ENCODE measurements at regions of chr14 and their contacts with region 1.

Region 1: GRCh38 chr14:93655078-93655750 is 133.1 kb downstream of the PRIMA1 start:
- DNase-seq: no peak
- ATAC-seq: peak in 2 of 4 donors; percentile 41 to 42
- H3K4me3 ChIP-seq: no peak overlapping the region
- H3K27ac ChIP-seq: no peak overlapping the region
- H3K4me1 ChIP-seq: peaks cover 0 to 5% (median 0%) of the 10 kb centered on the region in 12 donors
- H3K27me3 ChIP-seq: peaks cover 0 to 4% (median 0%) of the 10 kb centered on the region in 9 donors
- CTCF ChIP-seq: peak; percentile 37 to 69 (median 51)
- POLR2A ChIP-seq: no peak

Region 2: GRCh38 chr14:93892923-93893558 is 237.8 kb after region 1 on chr14:
- intact Hi-C with region 1: loop called (anchors 1 to 5 kb)
- DNase-seq: peak; percentile 58 to 82 (median 63)
- ATAC-seq: peak; percentile 21 to 72 (median 54)
- H3K4me3 ChIP-seq: peak overlapping the region in 2 of 12 donors; percentile 7 to 21
- H3K27ac ChIP-seq: no peak overlapping the region
- H3K4me1 ChIP-seq: peaks cover 0 to 11% (median 1%) of the 10 kb centered on the region in 12 donors
- H3K27me3 ChIP-seq: peaks cover 0 to 14% (median 0%) of the 10 kb centered on the region in 9 donors
- CTCF ChIP-seq: peak; percentile 92 to 99 (median 98)
- POLR2A ChIP-seq: no peak

Region 3: GRCh38 chr14:93906341-93907329 is 251.4 kb after region 1 on chr14:
- intact Hi-C with region 1: loop called in 2 of 10 experiments (anchors 5 kb)
- DNase-seq: peak in 1 of 5 donors; percentile 43
- ATAC-seq: peak in 3 of 4 donors; percentile 36 to 62 (median 39)
- H3K4me3 ChIP-seq: no peak overlapping the region
- H3K27ac ChIP-seq: no peak overlapping the region
- H3K4me1 ChIP-seq: no peaks in the 10 kb centered on the region
- H3K27me3 ChIP-seq: peaks cover 0 to 13% (median 7%) of the 10 kb centered on the region in 9 donors
- CTCF ChIP-seq: peak; percentile 37 to 64 (median 48)
- POLR2A ChIP-seq: no peak

Region 4: DNA sequence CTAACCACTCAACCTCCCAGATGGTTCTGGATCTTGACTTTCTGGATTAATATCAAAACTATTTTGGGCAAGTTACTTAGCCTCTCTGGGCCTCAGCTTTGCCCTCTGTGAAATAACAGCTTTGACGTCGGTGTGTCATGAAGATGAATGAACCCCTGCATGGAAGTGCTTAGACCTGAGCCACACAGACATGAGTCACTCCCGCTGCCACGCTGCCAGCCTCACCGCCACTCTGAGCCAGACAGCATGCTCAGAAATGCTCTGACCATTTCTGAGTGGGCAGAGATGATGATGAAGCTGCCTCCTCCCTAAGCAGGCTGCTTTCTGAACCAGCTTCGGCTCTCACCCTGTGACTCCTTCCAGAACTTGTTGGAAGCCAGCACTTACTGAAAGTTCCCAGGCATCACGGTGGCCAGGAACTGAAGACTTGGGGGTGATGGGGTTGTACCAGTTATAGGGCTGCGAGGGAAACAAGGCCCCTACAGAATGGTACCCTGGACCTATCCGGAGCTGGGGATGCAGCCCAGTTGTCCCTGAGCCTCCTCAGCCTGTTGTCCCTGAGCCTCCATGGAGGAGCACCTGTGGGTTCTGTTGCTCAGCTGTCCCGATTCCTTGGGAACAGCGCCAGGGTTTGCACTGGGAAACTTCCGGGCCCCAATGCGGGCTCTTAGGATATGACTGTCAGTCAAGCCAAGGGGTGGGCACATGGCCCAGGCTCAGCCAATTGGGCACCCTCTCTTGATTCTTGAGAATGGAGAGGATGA is 339.9 kb after region 1 on chr14:
- intact Hi-C with region 1: loop called in 3 of 10 experiments (anchors 10 kb)
- DNase-seq: peak in 4 of 5 donors; percentile 50 to 88 (median 60)
- ATAC-seq: peak; percentile 70 to 90 (median 74)
- H3K4me3 ChIP-seq: no peak overlapping the region
- H3K27ac ChIP-seq: peak overlapping the region in 8 of 12 donors; percentile 14 to 92 (median 62)
- H3K4me1 ChIP-seq: peaks cover 0 to 48% (median 19%) of the 10 kb centered on the region in 12 donors
- H3K27me3 ChIP-seq: no peaks in the 10 kb centered on the region
- CTCF ChIP-seq: no peak
- POLR2A ChIP-seq: no peak

Region 5: GRCh38 chr14:94001501-94002396 is 346.5 kb after region 1 on chr14:
- intact Hi-C with region 1: loop called in 3 of 10 experiments (anchors 10 kb)
- DNase-seq: peak in 4 of 5 donors; percentile 52 to 66 (median 60)
- ATAC-seq: peak; percentile 68 to 79 (median 76)
- H3K4me3 ChIP-seq: no peak overlapping the region
- H3K27ac ChIP-seq: peak overlapping the region in 1 of 12 donors; percentile 43
- H3K4me1 ChIP-seq: peaks cover 0 to 30% (median 10%) of the 10 kb centered on the region in 12 donors
- H3K27me3 ChIP-seq: peaks cover 0 to 4% (median 0%) of the 10 kb centered on the region in 9 donors
- CTCF ChIP-seq: peak; percentile 89 to 98 (median 96)
- POLR2A ChIP-seq: no peak

Measured in heart left ventricle (tissue), 16 donors.